ENCODE measurements at regions of chr6 and their contacts with region 1.

Region 1: GRCh38 chr6:36759148-36759759 is 61.6 kb downstream of the RAB44 start:
- DNase-seq: peak; percentile 63
- ATAC-seq: peak; percentile 96
- H3K4me3 ChIP-seq: no peak overlapping the region
- H3K27ac ChIP-seq: no peak overlapping the region
- H3K4me1 ChIP-seq: peaks cover 10% of the 10 kb centered on the region; the same call in 1 of the 2 replicates
- H3K27me3 ChIP-seq: peaks cover 3 to 73% of the 10 kb centered on the region in 2 experiments; a peak in 4 of 5 replicates
- CTCF ChIP-seq: peak; percentile 97
- EP300 ChIP-seq: no peak
- POLR2A ChIP-seq: no peak
- RAD21 ChIP-seq: peak; percentile 85

Region 2: DNA sequence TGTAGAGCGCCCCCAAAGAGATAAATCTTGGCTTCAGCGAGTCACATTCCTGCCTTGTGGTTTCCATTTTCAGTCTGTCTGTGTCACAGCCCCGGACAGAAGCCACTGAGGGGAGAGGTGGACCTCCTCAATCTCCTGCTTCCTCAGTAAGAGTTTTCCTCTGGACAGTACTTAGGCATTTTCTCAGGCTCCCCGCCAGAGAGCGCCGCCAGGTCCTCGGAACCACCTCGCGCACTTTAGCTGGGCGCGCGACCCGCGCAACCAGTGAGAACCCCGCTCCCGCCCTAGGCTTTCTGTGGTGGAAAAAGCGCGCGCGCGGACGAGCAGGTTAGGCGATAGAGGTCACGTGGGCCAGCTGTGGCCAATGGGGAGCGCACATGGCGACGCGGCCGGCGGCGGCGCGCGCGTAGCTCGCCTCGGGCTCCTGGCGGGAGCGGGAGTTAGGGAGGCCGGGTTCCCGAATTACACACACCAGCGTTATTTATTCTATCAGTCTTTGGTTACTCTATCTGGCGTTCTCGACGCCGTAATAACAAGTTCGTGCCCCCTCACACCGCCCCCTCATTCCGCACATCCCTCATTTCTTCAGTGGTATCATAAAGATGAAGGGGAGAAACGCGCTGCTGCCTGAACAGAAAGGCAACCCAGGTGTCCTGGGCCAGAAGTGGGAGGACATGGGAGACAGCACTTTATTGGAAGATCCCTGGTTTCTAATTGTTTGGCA is 336.0 kb before region 1 on chr6:
- CTCF ChIA-PET with region 1: no interaction called
- POLR2A ChIA-PET with region 1: no interaction called
- in situ Hi-C with region 1: no loop called
- intact Hi-C with region 1: loop called (anchors 1 kb)
- DNase-seq: peak; percentile 98
- ATAC-seq: peak; percentile 94
- H3K4me3 ChIP-seq: peak overlapping the region; percentile 64 to 72 (median 71)
- H3K27ac ChIP-seq: peak overlapping the region; percentile 62
- H3K4me1 ChIP-seq: peaks cover 41% of the 10 kb centered on the region
- H3K27me3 ChIP-seq: peaks cover 0 to 4% of the 10 kb centered on the region in 2 experiments; a peak in 1 of 5 replicates
- CTCF ChIP-seq: peak; percentile 98
- EP300 ChIP-seq: no peak
- POLR2A ChIP-seq: peak; percentile 43 to 75; a peak in 3 of 4 replicates
- RAD21 ChIP-seq: peak; percentile 92

Region 3: GRCh38 chr6:36615018-36615761 is 144.1 kb before region 1 on chr6:
- CTCF ChIA-PET with region 1: interaction called, 16 read pairs
- POLR2A ChIA-PET with region 1: no interaction called
- in situ Hi-C with region 1: no loop called
- intact Hi-C with region 1: loop called (anchors 1 kb)
- DNase-seq: peak; percentile 61
- ATAC-seq: peak; percentile 7
- H3K4me3 ChIP-seq: no peak overlapping the region
- H3K27ac ChIP-seq: no peak overlapping the region
- H3K4me1 ChIP-seq: no peaks in the 10 kb centered on the region
- H3K27me3 ChIP-seq: no peaks in the 10 kb centered on the region
- CTCF ChIP-seq: peak; percentile 82
- EP300 ChIP-seq: no peak
- POLR2A ChIP-seq: no peak
- RAD21 ChIP-seq: peak; percentile 72

Region 4: DNA sequence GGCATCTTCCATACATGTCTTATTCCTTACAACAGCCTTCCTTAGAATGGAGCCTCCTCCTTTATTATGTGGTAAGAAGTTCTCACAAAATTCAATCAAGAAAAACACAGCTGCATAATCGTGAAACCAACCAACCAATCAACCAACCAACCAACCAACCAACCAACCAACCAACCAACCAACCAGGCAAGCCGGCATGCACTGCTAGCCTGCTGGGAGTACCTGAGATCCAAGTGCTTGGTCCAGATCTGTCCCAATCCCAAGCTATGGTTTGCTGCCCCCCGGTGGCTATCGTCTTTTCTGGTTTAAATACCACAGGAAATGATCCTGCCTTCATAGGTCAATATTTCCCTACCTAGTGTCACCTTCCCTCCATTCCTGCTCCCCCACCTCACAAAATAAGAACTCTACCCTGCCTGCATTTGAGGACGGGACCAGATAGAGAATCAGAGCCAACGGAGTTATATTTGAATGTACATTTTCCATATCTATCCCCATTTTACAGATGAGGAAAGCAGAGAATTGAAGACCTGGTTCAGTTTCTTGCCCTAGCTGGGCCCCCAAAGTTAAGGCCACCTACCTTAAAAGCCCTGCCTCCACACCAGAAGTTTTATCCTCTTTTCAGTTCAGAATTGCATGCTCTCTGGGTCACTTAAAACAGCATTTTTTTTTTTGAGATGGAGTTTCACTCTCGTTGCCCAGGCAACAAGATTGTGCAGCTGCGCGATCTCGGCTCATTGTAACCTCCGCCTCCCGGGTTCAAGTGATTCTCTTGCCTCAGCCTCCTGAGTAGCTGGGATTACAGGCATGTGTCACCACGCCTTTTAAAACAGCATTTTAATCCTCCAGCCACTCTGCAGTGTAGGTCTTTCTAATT is 34.5 kb before region 1 on chr6:
- CTCF ChIA-PET with region 1: no interaction called
- POLR2A ChIA-PET with region 1: no interaction called
- in situ Hi-C with region 1: no loop called
- intact Hi-C with region 1: no loop called
- DNase-seq: peak; percentile 77
- ATAC-seq: peak; percentile 88
- H3K4me3 ChIP-seq: no peak overlapping the region
- H3K27ac ChIP-seq: no peak overlapping the region
- H3K4me1 ChIP-seq: no peaks in the 10 kb centered on the region
- H3K27me3 ChIP-seq: peaks cover 7 to 45% of the 10 kb centered on the region in 2 experiments; a peak in 3 of 5 replicates
- CTCF ChIP-seq: peak; percentile 93
- EP300 ChIP-seq: no peak
- POLR2A ChIP-seq: no peak
- RAD21 ChIP-seq: peak; percentile 93

Region 5: DNA sequence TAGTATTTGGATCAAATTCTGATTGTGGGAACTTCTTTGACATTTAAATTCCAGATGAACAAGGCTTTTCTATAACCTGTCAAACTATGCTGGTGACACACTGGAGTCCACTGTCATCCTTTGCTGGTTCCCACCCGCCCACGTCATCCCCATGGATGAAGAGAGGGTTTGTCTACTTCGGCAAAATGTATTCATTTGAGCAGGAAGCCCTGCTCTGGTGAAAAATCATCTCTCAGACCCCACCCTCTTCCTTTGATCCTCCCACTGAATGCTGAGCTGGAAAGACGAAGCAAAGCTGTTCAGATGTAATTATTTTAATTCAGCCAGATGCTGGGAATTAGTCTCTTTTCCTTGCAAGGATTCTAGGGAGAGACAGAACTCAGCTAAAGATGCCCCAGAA is 29.5 kb after region 1 on chr6:
- CTCF ChIA-PET with region 1: no interaction called
- POLR2A ChIA-PET with region 1: no interaction called
- in situ Hi-C with region 1: no loop called
- intact Hi-C with region 1: no loop called
- DNase-seq: peak; percentile 13
- ATAC-seq: no peak
- H3K4me3 ChIP-seq: no peak overlapping the region
- H3K27ac ChIP-seq: no peak overlapping the region
- H3K4me1 ChIP-seq: no peaks in the 10 kb centered on the region
- H3K27me3 ChIP-seq: peaks cover 10 to 72% of the 10 kb centered on the region in 2 experiments; a peak in 3 of 5 replicates
- CTCF ChIP-seq: no peak
- EP300 ChIP-seq: no peak
- POLR2A ChIP-seq: no peak
- RAD21 ChIP-seq: no peak

Measured in HepG2 (cell line).